ENCODE measurements at regions of chr3 and their contacts with region 1.

Region 1: DNA sequence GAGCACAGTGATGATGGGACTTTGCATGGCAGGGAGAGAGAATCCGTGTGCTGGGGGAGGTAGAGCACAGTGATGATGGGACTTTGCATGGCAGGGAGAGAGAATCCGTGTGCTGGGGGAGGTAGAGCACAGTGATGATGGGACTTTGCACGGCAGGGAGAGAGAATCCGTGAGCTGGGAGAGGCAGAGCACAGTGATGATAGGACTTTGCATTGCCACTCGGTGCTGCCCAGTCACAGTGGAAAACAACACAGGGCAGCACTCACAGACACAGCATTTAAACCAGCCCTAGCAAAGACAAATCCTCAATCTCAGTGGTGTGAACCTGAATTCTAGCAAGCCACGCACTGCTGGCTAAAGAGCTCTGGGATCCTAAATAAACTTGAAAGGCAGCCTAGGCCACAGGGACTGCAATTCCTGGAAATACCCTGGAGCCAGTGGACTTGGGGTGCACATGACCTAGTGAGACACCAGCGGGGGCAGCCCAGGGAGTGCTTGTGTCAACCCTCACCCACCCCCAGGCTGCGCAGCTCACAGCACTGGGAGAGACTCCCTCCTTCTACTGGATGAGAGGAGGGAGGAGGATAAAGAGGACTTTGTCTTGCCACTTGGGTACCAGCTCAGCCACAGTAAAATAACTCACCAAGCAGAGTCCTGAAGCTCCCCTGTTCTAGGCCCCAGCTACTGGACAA is 23.4 kb upstream of the TNK2 start:
- DNase-seq: no peak
- ATAC-seq: no peak
- H3K4me3 ChIP-seq: no peak overlapping the region
- H3K4me3 Mint-ChIP-seq: no peak overlapping the region
- H3K27ac ChIP-seq: no peak overlapping the region
- H3K27ac Mint-ChIP-seq: no peak overlapping the region
- H3K4me1 ChIP-seq: no peaks in the 10 kb centered on the region
- H3K4me1 Mint-ChIP-seq: no peaks in the 10 kb centered on the region
- H3K27me3 ChIP-seq: no peaks in the 10 kb centered on the region
- H3K27me3 Mint-ChIP-seq: no peaks in the 10 kb centered on the region

Region 2: GRCh38 chr3:195297446-195297845 is 634.3 kb before region 1 on chr3:
- CTCF ChIA-PET with region 1: no interaction called
- POLR2A ChIA-PET with region 1: interaction called in 1 of 2 experiments, 11 read pairs
- DNase-seq: no peak
- ATAC-seq: no peak
- H3K4me3 ChIP-seq: no peak overlapping the region
- H3K4me3 Mint-ChIP-seq: no peak overlapping the region
- H3K27ac ChIP-seq: no peak overlapping the region
- H3K27ac Mint-ChIP-seq: peak overlapping the region; percentile 50 to 76
- H3K4me1 ChIP-seq: no peaks in the 10 kb centered on the region
- H3K4me1 Mint-ChIP-seq: peaks cover 0 to 10% (median 6%) of the 10 kb centered on the region in 3 donors
- H3K27me3 ChIP-seq: no peaks in the 10 kb centered on the region
- H3K27me3 Mint-ChIP-seq: no peaks in the 10 kb centered on the region

Region 3: GRCh38 chr3:195763076-195763830 is 168.5 kb before region 1 on chr3:
- CTCF ChIA-PET with region 1: interaction called in 1 of 2 experiments, 11 read pairs
- POLR2A ChIA-PET with region 1: no interaction called
- DNase-seq: no peak
- ATAC-seq: no peak
- H3K4me3 ChIP-seq: no peak overlapping the region
- H3K4me3 Mint-ChIP-seq: peak overlapping the region in 1 of 3 donors; percentile 20
- H3K27ac ChIP-seq: no peak overlapping the region
- H3K27ac Mint-ChIP-seq: no peak overlapping the region
- H3K4me1 ChIP-seq: peaks cover 0 to 9% of the 10 kb centered on the region in 2 experiments
- H3K4me1 Mint-ChIP-seq: peaks cover 0 to 2% (median 0%) of the 10 kb centered on the region in 3 donors
- H3K27me3 ChIP-seq: peaks cover 0 to 53% of the 10 kb centered on the region in 2 experiments
- H3K27me3 Mint-ChIP-seq: peaks cover 30 to 35% of the 10 kb centered on the region in 2 donors

Region 4: DNA sequence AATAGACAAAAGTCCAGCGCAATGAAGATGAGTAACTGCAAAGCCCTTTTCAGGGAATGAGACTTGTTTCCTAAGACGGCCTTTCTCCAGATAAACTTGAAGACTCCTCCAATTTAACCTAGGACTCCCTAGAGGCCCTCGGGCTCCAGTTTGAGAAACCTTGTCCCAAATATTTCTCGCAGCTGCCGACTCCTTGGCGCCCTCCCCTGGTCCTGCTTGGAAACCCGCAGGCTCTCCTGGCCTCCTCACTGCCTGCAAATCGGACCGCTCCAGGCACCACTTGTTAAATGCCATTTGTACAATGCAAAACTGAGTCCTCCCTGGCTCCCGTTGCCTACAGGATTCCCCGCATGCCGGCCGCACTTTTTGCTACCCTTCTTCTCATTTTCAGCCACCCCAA is 156.8 kb before region 1 on chr3:
- CTCF ChIA-PET with region 1: no interaction called
- POLR2A ChIA-PET with region 1: no interaction called
- DNase-seq: peak in 1 of 35 experiments; percentile 5
- ATAC-seq: no peak
- H3K4me3 ChIP-seq: no peak overlapping the region
- H3K4me3 Mint-ChIP-seq: no peak overlapping the region
- H3K27ac ChIP-seq: no peak overlapping the region
- H3K27ac Mint-ChIP-seq: no peak overlapping the region
- H3K4me1 ChIP-seq: peaks cover 0 to 4% of the 10 kb centered on the region in 2 experiments
- H3K4me1 Mint-ChIP-seq: peaks cover 4 to 11% (median 9%) of the 10 kb centered on the region in 3 donors
- H3K27me3 ChIP-seq: peaks cover 0 to 4% of the 10 kb centered on the region in 2 experiments
- H3K27me3 Mint-ChIP-seq: no peaks in the 10 kb centered on the region

Region 5: DNA sequence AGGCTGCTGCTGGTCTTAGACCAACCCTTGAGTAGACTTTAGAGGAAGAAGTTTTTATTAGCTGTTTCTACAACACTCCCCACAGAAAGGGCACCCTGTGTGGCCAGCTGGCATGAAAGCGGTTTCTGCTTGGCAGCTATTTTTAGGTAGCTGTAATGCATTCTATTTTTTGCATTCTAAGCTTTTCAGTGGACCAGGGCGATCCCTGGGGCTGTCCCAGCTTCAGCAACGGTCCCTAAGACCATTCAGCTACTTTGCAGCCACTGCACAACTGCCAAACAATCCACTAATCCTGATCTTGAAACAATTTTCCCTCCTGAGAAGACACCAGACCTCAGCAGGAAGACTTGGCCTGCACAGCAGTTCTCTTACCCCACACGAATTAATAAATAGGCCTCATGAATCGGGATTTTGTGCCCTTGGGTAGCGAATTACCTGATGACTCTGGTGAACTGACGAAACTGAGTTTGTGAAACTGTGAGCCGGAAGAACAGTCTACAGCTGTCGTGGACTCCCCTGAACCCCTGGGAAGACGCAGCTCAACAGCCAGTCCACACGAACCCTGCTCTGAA is 164.7 kb after region 1 on chr3:
- CTCF ChIA-PET with region 1: no interaction called
- POLR2A ChIA-PET with region 1: no interaction called
- DNase-seq: no peak
- ATAC-seq: no peak
- H3K4me3 ChIP-seq: no peak overlapping the region
- H3K4me3 Mint-ChIP-seq: no peak overlapping the region
- H3K27ac ChIP-seq: no peak overlapping the region
- H3K27ac Mint-ChIP-seq: peak overlapping the region in 1 of 2 donors; percentile 20
- H3K4me1 ChIP-seq: peaks cover 0 to 13% of the 10 kb centered on the region in 2 experiments
- H3K4me1 Mint-ChIP-seq: peaks cover 2 to 16% (median 16%) of the 10 kb centered on the region in 3 donors
- H3K27me3 ChIP-seq: no peaks in the 10 kb centered on the region
- H3K27me3 Mint-ChIP-seq: no peaks in the 10 kb centered on the region

Region 6: GRCh38 chr3:196568246-196569002 is 636.7 kb after region 1 on chr3 and contains the starts of genes FBXO45 and WDR53:
- CTCF ChIA-PET with region 1: no interaction called
- POLR2A ChIA-PET with region 1: no interaction called
- DNase-seq: peak; percentile 89 to 98 (median 95)
- ATAC-seq: peak; percentile 92 to 94 (median 92)
- H3K4me3 ChIP-seq: peak within 1 kb of the TSS; percentile 72 to 79
- H3K4me3 Mint-ChIP-seq: peak within 1 kb of the TSS; percentile 87 to 96 (median 94)
- H3K27ac ChIP-seq: peak within 1 kb of the TSS; percentile 83
- H3K27ac Mint-ChIP-seq: peak within 1 kb of the TSS; percentile 93 to 97
- H3K4me1 ChIP-seq: peaks cover 8 to 33% of the 10 kb centered on the region in 2 experiments
- H3K4me1 Mint-ChIP-seq: peaks cover 33 to 51% (median 49%) of the 10 kb centered on the region in 3 donors
- H3K27me3 ChIP-seq: no peaks in the 10 kb centered on the region
- H3K27me3 Mint-ChIP-seq: no peaks in the 10 kb centered on the region
- total RNA-seq, gene FBXO45: 4.9 to 9.5 (median 8.2) TPM
- total RNA-seq, gene WDR53: 19.2 to 29.8 (median 25.5) TPM